Heart left ventricle (tissue), 16 donors: ENCODE measurements at regions of chr2 and their contacts with region 1.

Region 1: DNA sequence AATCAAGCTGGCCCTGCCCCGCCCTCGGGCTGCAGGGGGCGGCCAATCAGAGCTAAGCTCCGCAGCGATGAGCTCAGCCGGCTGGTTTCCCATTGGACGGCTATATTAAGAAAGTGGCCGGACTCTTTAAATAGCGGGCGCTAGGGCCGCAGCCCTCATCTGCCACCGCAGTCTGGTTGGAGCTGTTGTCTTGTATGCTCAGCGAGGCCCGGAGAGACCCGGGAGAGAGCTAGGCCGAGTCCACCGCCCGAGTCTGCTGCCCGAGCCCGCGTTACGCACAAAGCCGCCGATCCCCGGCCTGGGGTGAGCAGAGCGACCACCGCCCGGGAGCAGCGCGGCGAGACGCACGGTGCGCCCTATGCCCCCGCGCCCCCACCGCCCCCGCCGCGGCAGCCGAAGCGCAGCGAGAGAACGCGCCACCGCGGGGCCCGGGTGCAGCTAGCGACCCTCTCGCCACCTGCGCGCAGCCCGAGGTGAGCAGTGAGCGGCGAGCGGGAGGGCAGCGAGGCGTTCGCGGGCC is at the start of gene RHOB:
- DNase-seq: peak; percentile 96 to 98 (median 98)
- ATAC-seq: peak; percentile 87 to 94 (median 88)
- H3K4me3 ChIP-seq: peak within 1 kb of the TSS; percentile 77 to 99 (median 95)
- H3K27ac ChIP-seq: peak within 1 kb of the TSS; percentile 94 to 100 (median 98)
- H3K4me1 ChIP-seq: peaks cover 0 to 58% (median 36%) of the 10 kb centered on the region in 12 donors
- H3K27me3 ChIP-seq: no peaks in the 10 kb centered on the region
- CTCF ChIP-seq: no peak
- POLR2A ChIP-seq: peak; percentile 2 to 100
- total RNA-seq, gene RHOB: 105 to 429 (median 169) TPM

Region 2: GRCh38 chr2:20051532-20052228 is 395.3 kb before region 1 on chr2 and contains the start of gene LAPTM4A:
- intact Hi-C with region 1: no loop called
- DNase-seq: peak; percentile 99
- ATAC-seq: peak; percentile 97 to 99 (median 98)
- H3K4me3 ChIP-seq: peak within 1 kb of the TSS; percentile 60 to 91 (median 82)
- H3K27ac ChIP-seq: peak within 1 kb of the TSS; percentile 94 to 99 (median 98)
- H3K4me1 ChIP-seq: peaks cover 0 to 39% (median 30%) of the 10 kb centered on the region in 12 donors
- H3K27me3 ChIP-seq: no peaks in the 10 kb centered on the region
- CTCF ChIP-seq: peak in 3 of 12 donors; percentile 15 to 26 (median 24)
- POLR2A ChIP-seq: peak in 1 of 2 donors; percentile 83
- total RNA-seq, gene LAPTM4A: 159 to 241 (median 177) TPM

Region 3: GRCh38 chr2:20457653-20458630 is 11.0 kb after region 1 on chr2:
- intact Hi-C with region 1: no loop called
- DNase-seq: no peak
- ATAC-seq: no peak
- H3K4me3 ChIP-seq: no peak overlapping the region
- H3K27ac ChIP-seq: peak overlapping the region in 1 of 12 donors; percentile 52
- H3K4me1 ChIP-seq: peaks cover 0 to 3% (median 0%) of the 10 kb centered on the region in 12 donors
- H3K27me3 ChIP-seq: no peaks in the 10 kb centered on the region
- CTCF ChIP-seq: no peak
- POLR2A ChIP-seq: no peak

Region 4: GRCh38 chr2:20483194-20483895 is 36.4 kb after region 1 on chr2:
- intact Hi-C with region 1: no loop called
- DNase-seq: peak in 2 of 5 donors; percentile 48 to 52
- ATAC-seq: peak; percentile 28 to 78 (median 48)
- H3K4me3 ChIP-seq: no peak overlapping the region
- H3K27ac ChIP-seq: peak overlapping the region in 6 of 12 donors; percentile 9 to 66 (median 23)
- H3K4me1 ChIP-seq: peaks cover 0 to 24% (median 8%) of the 10 kb centered on the region in 12 donors
- H3K27me3 ChIP-seq: no peaks in the 10 kb centered on the region
- CTCF ChIP-seq: no peak
- POLR2A ChIP-seq: no peak

Region 5: GRCh38 chr2:20514596-20515269 is 67.8 kb after region 1 on chr2:
- intact Hi-C with region 1: no loop called
- DNase-seq: peak in 4 of 5 donors; percentile 39 to 65 (median 62)
- ATAC-seq: peak in 3 of 4 donors; percentile 83 to 85 (median 84)
- H3K4me3 ChIP-seq: no peak overlapping the region
- H3K27ac ChIP-seq: peak overlapping the region in 4 of 12 donors; percentile 13 to 42 (median 27)
- H3K4me1 ChIP-seq: peaks cover 0 to 11% (median 0%) of the 10 kb centered on the region in 12 donors
- H3K27me3 ChIP-seq: no peaks in the 10 kb centered on the region
- CTCF ChIP-seq: no peak
- POLR2A ChIP-seq: no peak

Region 6: GRCh38 chr2:20578895-20579825 is 132.2 kb after region 1 on chr2:
- intact Hi-C with region 1: loop called in 2 of 10 experiments (anchors 2 to 5 kb)
- DNase-seq: peak; percentile 78 to 95 (median 90)
- ATAC-seq: peak; percentile 88 to 92 (median 92)
- H3K4me3 ChIP-seq: peak overlapping the region in 1 of 12 donors; percentile 1
- H3K27ac ChIP-seq: peak overlapping the region; percentile 57 to 94 (median 86)
- H3K4me1 ChIP-seq: peaks cover 13 to 82% (median 63%) of the 10 kb centered on the region in 12 donors
- H3K27me3 ChIP-seq: no peaks in the 10 kb centered on the region
- CTCF ChIP-seq: no peak
- POLR2A ChIP-seq: peak in 1 of 2 donors; percentile 8

Region 7: DNA sequence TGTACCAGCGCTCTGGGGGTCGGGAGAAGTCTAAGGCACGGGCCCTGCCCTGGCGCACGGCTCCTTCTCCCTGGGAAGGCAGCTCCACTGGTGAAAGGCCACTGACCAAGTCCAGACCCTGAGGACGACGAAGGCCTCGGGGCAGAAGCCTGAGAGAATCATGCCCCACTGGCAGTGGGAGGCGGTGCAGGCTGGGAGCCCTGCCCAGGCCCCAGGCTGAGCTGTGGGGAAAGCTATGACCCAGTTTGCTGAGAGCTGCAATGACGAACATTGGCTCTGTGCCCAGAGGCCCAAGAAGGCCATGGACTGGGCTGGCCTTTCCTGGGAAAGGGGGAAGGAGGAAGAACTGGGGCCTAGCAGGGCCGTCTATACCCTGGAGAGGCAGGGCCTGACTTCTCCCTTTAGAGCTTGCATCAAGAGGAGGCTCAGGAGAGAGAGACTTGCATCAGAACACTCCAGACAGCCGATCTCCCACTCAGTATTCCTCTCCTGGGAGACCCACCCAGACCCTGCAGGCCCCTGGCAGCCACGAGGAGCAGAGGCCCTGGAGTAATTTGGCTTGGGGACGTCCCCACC is 171.0 kb after region 1 on chr2:
- intact Hi-C with region 1: loop called in 9 of 10 experiments (anchors 1 to 5 kb)
- DNase-seq: peak; percentile 96 to 99 (median 98)
- ATAC-seq: peak; percentile 79 to 84 (median 82)
- H3K4me3 ChIP-seq: peak overlapping the region in 1 of 12 donors; percentile 5
- H3K27ac ChIP-seq: peak overlapping the region; percentile 86 to 99 (median 95)
- H3K4me1 ChIP-seq: peaks cover 43 to 97% (median 85%) of the 10 kb centered on the region in 12 donors
- H3K27me3 ChIP-seq: no peaks in the 10 kb centered on the region
- CTCF ChIP-seq: peak; percentile 15 to 75 (median 52)
- POLR2A ChIP-seq: peak in 1 of 2 donors; percentile 48

Region 8: DNA sequence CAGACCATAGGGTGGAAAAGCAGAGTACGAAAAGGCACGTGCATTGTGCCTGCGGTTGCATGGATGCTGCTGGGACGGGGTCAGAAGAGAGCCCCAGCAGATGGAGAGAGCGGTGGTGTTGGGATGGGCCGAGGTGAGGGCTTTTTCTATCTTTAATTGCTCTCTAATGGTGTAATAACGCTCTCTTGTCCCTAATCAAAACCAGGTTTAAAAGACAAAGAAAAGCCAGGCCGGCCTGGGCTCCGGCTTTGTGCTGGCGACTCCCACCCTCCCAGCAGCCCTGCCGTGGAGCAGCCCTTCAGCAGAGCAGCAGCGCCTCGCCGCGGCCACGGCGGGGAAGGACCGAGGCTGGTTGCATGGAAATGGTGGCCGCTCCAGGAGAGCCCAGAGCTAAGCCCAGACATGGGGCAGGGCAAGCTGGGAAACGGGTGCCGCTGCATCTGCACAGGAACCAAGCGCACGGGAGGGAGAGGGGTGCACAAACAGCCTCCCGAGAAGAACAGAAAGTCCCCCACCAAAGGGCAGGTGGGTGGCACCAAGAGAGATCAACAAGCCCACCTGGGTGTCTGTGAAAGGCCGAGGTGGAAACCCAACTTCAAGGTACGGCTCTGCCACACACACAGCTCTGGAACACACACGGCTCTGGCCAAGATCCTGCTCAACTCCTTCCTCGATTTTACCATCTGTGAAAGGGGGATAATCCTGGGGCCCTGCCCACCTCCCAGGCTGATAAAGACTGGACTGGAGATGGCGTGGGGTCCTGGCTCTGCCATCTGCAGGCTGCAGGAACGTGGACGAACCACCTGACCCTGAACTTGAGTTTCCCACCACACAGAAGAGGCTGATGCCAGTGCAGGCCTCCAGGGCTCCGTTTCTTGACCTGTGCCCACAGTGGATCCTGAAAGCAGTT is 189.0 kb after region 1 on chr2:
- intact Hi-C with region 1: loop called (anchors 1 to 5 kb)
- DNase-seq: peak; percentile 88 to 93 (median 89)
- ATAC-seq: peak; percentile 76 to 86 (median 85)
- H3K4me3 ChIP-seq: peak overlapping the region in 1 of 12 donors; percentile 10
- H3K27ac ChIP-seq: peak overlapping the region; percentile 32 to 90 (median 77)
- H3K4me1 ChIP-seq: peaks cover 5 to 66% (median 41%) of the 10 kb centered on the region in 12 donors
- H3K27me3 ChIP-seq: no peaks in the 10 kb centered on the region
- CTCF ChIP-seq: peak; percentile 76 to 99 (median 96)
- POLR2A ChIP-seq: peak in 1 of 2 donors; percentile 21